GM23248 (cell line): ENCODE measurements at regions of chr6 and their contacts with region 1.

Region 1: GRCh38 chr6:167919349-167919748 is 78.1 kb upstream of the KIF25 start:
- DNase-seq: no peak
- H3K4me3 ChIP-seq: no peak overlapping the region
- H3K27ac ChIP-seq: no peak overlapping the region
- H3K4me1 ChIP-seq: no peaks in the 10 kb centered on the region
- H3K27me3 ChIP-seq: no peaks in the 10 kb centered on the region

Region 2: DNA sequence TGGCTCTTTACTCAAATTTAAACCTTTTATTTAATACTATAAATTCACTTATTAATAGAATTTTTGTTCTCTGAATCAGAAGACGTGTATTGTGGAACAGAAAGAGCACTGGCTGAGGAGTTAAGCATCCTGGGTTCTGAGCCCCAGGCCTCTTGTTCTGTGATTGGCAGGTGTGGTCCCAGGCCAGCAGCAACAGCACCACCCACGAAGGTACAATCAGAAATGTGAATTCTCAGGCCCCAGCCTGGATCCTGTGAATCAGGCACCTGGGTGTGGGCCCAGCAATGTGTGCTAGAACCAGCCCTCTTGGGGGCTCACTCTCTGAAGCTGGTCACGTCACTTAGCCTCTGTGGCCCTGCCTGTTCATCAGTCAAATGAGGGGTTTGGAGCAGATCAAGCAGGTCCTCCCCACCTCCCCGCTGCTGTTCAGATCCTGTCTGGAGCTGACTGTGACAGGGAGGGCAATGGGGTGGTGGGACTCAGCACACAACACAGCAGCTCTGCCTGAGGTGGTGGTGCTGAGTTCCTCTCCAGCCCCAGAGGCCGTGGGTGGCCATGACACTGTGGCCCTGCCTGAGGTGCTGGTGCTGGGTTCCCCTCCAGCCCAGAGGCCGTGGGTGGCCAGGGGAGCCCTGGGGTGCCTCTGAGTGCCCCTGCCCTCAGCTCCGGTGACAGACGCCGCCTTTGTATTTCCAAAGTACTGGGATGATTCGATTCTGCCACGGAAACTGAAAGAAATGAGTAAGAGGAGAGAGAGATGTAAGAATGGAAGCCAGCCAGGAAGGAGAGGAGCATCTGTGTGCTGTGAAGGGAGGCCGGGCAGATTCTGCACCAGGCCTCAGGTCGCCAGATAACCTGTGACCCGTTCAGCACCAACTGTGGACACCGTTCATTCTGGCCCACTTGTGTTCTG is 201.3 kb after region 1 on chr6:
- in situ Hi-C with region 1: loop called (anchors 10 kb)
- DNase-seq: no peak
- H3K4me3 ChIP-seq: no peak overlapping the region
- H3K27ac ChIP-seq: no peak overlapping the region
- H3K4me1 ChIP-seq: no peaks in the 10 kb centered on the region
- H3K27me3 ChIP-seq: peaks cover 7% of the 10 kb centered on the region; the same call in 1 of the 2 replicates